ENCODE measurements at regions of chr20 and their contacts with region 1.

Region 1: GRCh38 chr20:58087193-58087858 is 141.1 kb downstream of the ANKRD60 start:
- DNase-seq: peak; percentile 43
- H3K4me3 ChIP-seq: no peak overlapping the region
- H3K27ac ChIP-seq: no peak overlapping the region
- H3K4me1 ChIP-seq: peaks cover 0 to 1% (median 0%) of the 10 kb centered on the region in 4 donors
- H3K27me3 ChIP-seq: no peaks in the 10 kb centered on the region
- CTCF ChIP-seq: peak in 3 of 4 experiments; percentile 57 to 85 (median 65)
- EP300 ChIP-seq: no peak
- POLR2A ChIP-seq: no peak

Region 2: GRCh38 chr20:58141971-58142781 is 54.9 kb after region 1 on chr20:
- intact Hi-C with region 1: no loop called
- DNase-seq: peak; percentile 30
- H3K4me3 ChIP-seq: no peak overlapping the region
- H3K27ac ChIP-seq: no peak overlapping the region
- H3K4me1 ChIP-seq: peaks cover 0 to 3% (median 0%) of the 10 kb centered on the region in 4 donors
- H3K27me3 ChIP-seq: peaks cover 0 to 43% (median 12%) of the 10 kb centered on the region in 3 donors
- CTCF ChIP-seq: no peak
- EP300 ChIP-seq: no peak
- POLR2A ChIP-seq: no peak

Region 3: GRCh38 chr20:58179432-58180099 is 92.2 kb after region 1 on chr20:
- intact Hi-C with region 1: loop called (anchors 5 kb)
- DNase-seq: peak; percentile 73
- H3K4me3 ChIP-seq: peak overlapping the region in 3 of 4 donors; percentile 12 to 30 (median 25)
- H3K27ac ChIP-seq: no peak overlapping the region
- H3K4me1 ChIP-seq: peaks cover 0 to 20% (median 13%) of the 10 kb centered on the region in 4 donors
- H3K27me3 ChIP-seq: peaks cover 0 to 10% (median 0%) of the 10 kb centered on the region in 3 donors
- CTCF ChIP-seq: peak; percentile 82 to 97 (median 88)
- EP300 ChIP-seq: no peak
- POLR2A ChIP-seq: no peak